ENCODE measurements at regions of chr20 and their contacts with region 1.

Region 1: GRCh38 chr20:46089417-46090388 is at the start of gene NCOA5:
- DNase-seq: peak; percentile 89 to 96 (median 94)
- ATAC-seq: peak; percentile 93
- H3K4me3 ChIP-seq: peak within 1 kb of the TSS; percentile 84 to 86
- H3K4me3 Mint-ChIP-seq: peak within 1 kb of the TSS; percentile 89
- H3K27ac ChIP-seq: peak within 1 kb of the TSS; percentile 80 to 85
- H3K27ac Mint-ChIP-seq: peak within 1 kb of the TSS; percentile 87
- H3K4me1 ChIP-seq: peaks cover 43% of the 10 kb centered on the region
- H3K4me1 Mint-ChIP-seq: peaks cover 50% of the 10 kb centered on the region
- H3K27me3 ChIP-seq: no peaks in the 10 kb centered on the region
- H3K27me3 Mint-ChIP-seq: no peaks in the 10 kb centered on the region
- CTCF ChIP-seq: no peak
- total RNA-seq, gene NCOA5: 9.6 to 11.7 TPM

Region 2: DNA sequence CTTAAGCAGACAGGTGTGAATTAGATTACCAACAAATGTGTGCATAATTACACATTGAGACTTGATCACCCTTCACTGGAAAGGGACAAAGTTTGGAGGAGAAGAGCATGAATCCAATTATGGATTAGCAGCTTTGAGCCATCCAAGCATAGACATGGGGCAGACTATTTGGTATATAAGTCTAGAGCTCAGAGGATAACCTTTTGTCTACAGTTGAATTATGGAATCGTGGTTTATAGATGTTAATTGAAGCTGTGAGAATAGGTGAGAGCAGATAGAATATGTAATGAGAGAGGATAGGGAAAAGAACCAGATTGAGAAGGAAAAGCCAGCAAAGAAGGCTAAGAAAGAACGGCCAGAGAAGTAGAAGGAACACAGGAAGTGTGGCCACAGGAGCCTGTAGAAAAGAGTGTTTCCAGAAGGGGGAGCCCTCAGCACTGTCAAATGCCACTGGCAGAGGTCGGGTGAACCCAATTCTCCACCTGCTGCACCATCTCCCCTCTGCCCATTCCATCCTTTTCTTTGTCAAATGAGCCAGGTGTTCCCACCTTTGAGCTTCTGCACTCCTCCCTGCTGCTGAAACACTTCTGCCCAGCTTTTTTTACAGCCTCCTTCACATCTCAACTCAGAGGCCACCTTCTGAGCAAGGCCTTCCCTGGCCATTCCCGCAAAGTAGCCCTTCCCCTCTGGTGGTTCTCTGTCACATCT is 290.6 kb before region 1 on chr20:
- CTCF ChIA-PET with region 1: no interaction called
- POLR2A ChIA-PET with region 1: no interaction called
- intact Hi-C with region 1: loop called in 1 of 2 experiments (anchors 10 kb)
- DNase-seq: peak; percentile 19 to 78 (median 66)
- ATAC-seq: peak; percentile 96
- H3K4me3 ChIP-seq: no peak overlapping the region
- H3K4me3 Mint-ChIP-seq: no peak overlapping the region
- H3K27ac ChIP-seq: peak overlapping the region in 1 of 2 experiments; percentile 31
- H3K27ac Mint-ChIP-seq: peak overlapping the region; percentile 61
- H3K4me1 ChIP-seq: peaks cover 9% of the 10 kb centered on the region
- H3K4me1 Mint-ChIP-seq: peaks cover 11% of the 10 kb centered on the region
- H3K27me3 ChIP-seq: no peaks in the 10 kb centered on the region
- H3K27me3 Mint-ChIP-seq: no peaks in the 10 kb centered on the region
- CTCF ChIP-seq: peak; percentile 73

Region 3: DNA sequence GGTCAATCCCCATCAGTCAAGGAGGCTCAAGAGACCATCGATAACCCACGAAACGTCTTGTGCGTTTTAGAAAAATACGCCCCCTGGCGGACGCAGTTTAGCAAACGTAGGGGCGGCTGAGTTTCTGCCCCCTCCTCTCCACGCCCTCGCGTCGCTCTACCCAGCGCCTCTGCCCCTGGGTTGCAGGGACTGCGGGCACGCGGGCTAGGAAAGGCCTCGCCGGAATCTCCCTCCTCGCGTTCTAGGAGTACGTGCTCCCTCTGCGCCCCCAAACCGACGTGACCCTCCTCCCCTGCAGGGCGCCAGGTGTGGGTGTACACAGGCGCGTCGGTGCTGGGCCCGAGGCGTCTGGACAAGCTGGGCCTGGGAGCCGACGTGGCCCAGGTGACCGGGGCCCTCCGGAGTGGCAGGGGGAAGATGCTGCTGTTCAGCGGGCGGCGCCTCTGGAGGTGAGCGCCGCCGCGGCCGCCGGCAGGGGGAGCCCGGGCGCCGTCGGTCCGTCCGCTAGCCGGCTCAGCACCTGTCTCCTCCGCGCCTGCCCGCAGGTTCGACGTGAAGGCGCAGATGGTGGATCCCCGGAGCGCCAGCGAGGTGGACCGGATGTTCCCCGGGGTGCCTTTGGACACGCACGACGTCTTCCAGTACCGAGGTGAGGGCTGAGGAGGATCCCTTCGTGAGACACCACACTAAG is 75.7 kb before region 1 on chr20:
- CTCF ChIA-PET with region 1: interaction called, 7 read pairs
- POLR2A ChIA-PET with region 1: no interaction called
- intact Hi-C with region 1: loop called (anchors 2 kb)
- DNase-seq: peak; percentile 44 to 85 (median 73)
- ATAC-seq: peak; percentile 60
- H3K4me3 ChIP-seq: peak overlapping the region; percentile 22 to 34
- H3K4me3 Mint-ChIP-seq: peak overlapping the region; percentile 15
- H3K27ac ChIP-seq: no peak overlapping the region
- H3K27ac Mint-ChIP-seq: no peak overlapping the region
- H3K4me1 ChIP-seq: peaks cover 40% of the 10 kb centered on the region
- H3K4me1 Mint-ChIP-seq: peaks cover 46% of the 10 kb centered on the region
- H3K27me3 ChIP-seq: peaks cover 34 to 44% of the 10 kb centered on the region in 2 experiments
- H3K27me3 Mint-ChIP-seq: peaks cover 76% of the 10 kb centered on the region
- CTCF ChIP-seq: peak; percentile 94

Region 4: GRCh38 chr20:46117704-46118467 is 28.2 kb after region 1 on chr20 and contains the start of gene CD40:
- CTCF ChIA-PET with region 1: no interaction called
- POLR2A ChIA-PET with region 1: no interaction called
- intact Hi-C with region 1: loop called in 1 of 2 experiments (anchors 2 kb)
- DNase-seq: peak; percentile 27 to 87 (median 71)
- ATAC-seq: peak; percentile 95
- H3K4me3 ChIP-seq: peak within 1 kb of the TSS; percentile 61 to 90
- H3K4me3 Mint-ChIP-seq: peak within 1 kb of the TSS; percentile 93
- H3K27ac ChIP-seq: peak within 1 kb of the TSS in 1 of 2 experiments; percentile 32
- H3K27ac Mint-ChIP-seq: peak within 1 kb of the TSS; percentile 80
- H3K4me1 ChIP-seq: peaks cover 13% of the 10 kb centered on the region
- H3K4me1 Mint-ChIP-seq: peaks cover 21% of the 10 kb centered on the region
- H3K27me3 ChIP-seq: no peaks in the 10 kb centered on the region
- H3K27me3 Mint-ChIP-seq: peaks cover 14% of the 10 kb centered on the region
- CTCF ChIP-seq: no peak
- total RNA-seq, gene CD40: 2.9 to 3.2 TPM

Region 5: GRCh38 chr20:46689082-46689754 is 599.5 kb after region 1 on chr20 and contains the start of gene TP53RK:
- CTCF ChIA-PET with region 1: no interaction called
- POLR2A ChIA-PET with region 1: no interaction called
- intact Hi-C with region 1: loop called in 1 of 2 experiments (anchors 1 kb)
- DNase-seq: peak; percentile 89 to 99 (median 96)
- ATAC-seq: peak; percentile 96
- H3K4me3 ChIP-seq: peak within 1 kb of the TSS; percentile 92 to 96
- H3K4me3 Mint-ChIP-seq: peak within 1 kb of the TSS; percentile 100
- H3K27ac ChIP-seq: peak within 1 kb of the TSS; percentile 74 to 83
- H3K27ac Mint-ChIP-seq: peak within 1 kb of the TSS; percentile 99
- H3K4me1 ChIP-seq: peaks cover 42% of the 10 kb centered on the region
- H3K4me1 Mint-ChIP-seq: peaks cover 57% of the 10 kb centered on the region
- H3K27me3 ChIP-seq: no peaks in the 10 kb centered on the region
- H3K27me3 Mint-ChIP-seq: no peaks in the 10 kb centered on the region
- CTCF ChIP-seq: no peak
- total RNA-seq, gene TP53RK: 5.4 TPM

Measured in CD8-positive, alpha-beta T cell (primary cell).